ENCODE measurements at regions of chr1 and their contacts with region 1.

Region 1: DNA sequence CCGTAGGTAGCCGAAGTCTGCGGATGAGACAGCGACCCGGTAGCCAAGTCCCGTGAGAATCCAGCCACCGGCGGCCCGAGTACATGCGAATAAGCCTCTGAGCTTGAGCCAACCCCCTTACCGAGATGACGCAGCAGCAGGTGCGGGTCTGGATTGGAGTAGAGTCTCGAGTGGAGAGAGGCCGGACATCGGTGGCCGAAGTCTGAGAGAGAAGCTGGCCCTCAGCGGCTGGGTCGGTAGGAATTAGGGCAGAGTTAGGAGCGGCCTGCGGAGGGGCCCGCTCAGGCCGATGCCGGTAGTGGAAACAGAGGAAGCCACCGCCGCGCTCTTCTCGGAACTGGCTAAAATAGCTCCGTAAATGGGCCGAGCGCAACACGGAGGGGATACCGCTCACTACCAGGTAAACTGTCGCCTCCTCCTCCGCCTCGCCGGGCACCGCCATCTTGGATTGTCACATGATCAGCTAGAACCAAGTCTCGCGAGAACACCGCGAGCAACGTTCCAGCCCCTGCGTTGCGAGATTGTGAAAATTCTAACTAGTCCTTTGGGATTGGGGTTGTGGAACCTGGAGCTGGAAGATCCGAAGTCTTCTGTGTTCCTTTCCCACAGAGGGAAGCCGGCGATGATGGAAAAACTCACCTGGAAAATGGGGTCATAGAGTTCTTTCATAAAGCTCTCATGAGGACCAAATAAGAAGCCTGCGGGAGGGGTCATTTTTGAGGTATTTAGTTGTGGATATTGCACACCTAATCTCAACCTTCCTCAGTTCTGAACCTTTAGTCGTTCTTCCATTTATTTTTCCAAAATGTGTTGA is at the start of gene GPATCH3:
- DNase-seq: peak; percentile 94
- ATAC-seq: peak; percentile 92
- H3K4me3 ChIP-seq: peak within 1 kb of the TSS; percentile 84 to 100 (median 97)
- H3K4me3 Mint-ChIP-seq: peak within 1 kb of the TSS; percentile 92
- H3K27ac ChIP-seq: peak within 1 kb of the TSS; percentile 82 to 92
- H3K27ac Mint-ChIP-seq: peak within 1 kb of the TSS; percentile 99
- H3K4me1 ChIP-seq: peaks cover 16 to 20% of the 10 kb centered on the region in 2 donors
- H3K4me1 Mint-ChIP-seq: peaks cover 36% of the 10 kb centered on the region
- H3K27me3 ChIP-seq: no peaks in the 10 kb centered on the region
- H3K27me3 Mint-ChIP-seq: no peaks in the 10 kb centered on the region
- CTCF ChIP-seq: no peak
- total RNA-seq, gene GPATCH3: 21.9 and 28.6 TPM in 2 replicates

Region 2: GRCh38 chr1:26921540-26922430 is 21.6 kb after region 1 on chr1 and contains the start of gene NUDC:
- CTCF ChIA-PET with region 1: interaction called, 3 read pairs
- POLR2A ChIA-PET with region 1: interaction called, 9 read pairs
- intact Hi-C with region 1: loop called (anchors 1 kb)
- DNase-seq: peak; percentile 96
- ATAC-seq: peak; percentile 96
- H3K4me3 ChIP-seq: peak within 1 kb of the TSS; percentile 61 to 88 (median 80)
- H3K4me3 Mint-ChIP-seq: peak within 1 kb of the TSS; percentile 93
- H3K27ac ChIP-seq: peak within 1 kb of the TSS; percentile 68 to 93
- H3K27ac Mint-ChIP-seq: peak within 1 kb of the TSS; percentile 93
- H3K4me1 ChIP-seq: peaks cover 17 to 20% of the 10 kb centered on the region in 2 donors
- H3K4me1 Mint-ChIP-seq: peaks cover 33% of the 10 kb centered on the region
- H3K27me3 ChIP-seq: no peaks in the 10 kb centered on the region
- H3K27me3 Mint-ChIP-seq: no peaks in the 10 kb centered on the region
- CTCF ChIP-seq: no peak
- total RNA-seq, gene NUDC: 45.3 and 50.1 TPM in 2 replicates

Measured in B cell (primary cell).